ENCODE measurements at regions of chr16 and their contacts with region 1.

Region 1: GRCh38 chr16:2500918-2501750 is 12.6 kb upstream of the ATP6V0C start:
- DNase-seq: peak; percentile 79 to 85 (median 84)
- ATAC-seq: peak; percentile 75 to 83 (median 79)
- H3K4me3 ChIP-seq: no peak overlapping the region
- H3K27ac ChIP-seq: no peak overlapping the region
- H3K4me1 ChIP-seq: peaks cover 0 to 44% (median 23%) of the 10 kb centered on the region in 4 donors
- H3K27me3 ChIP-seq: no peaks in the 10 kb centered on the region
- CTCF ChIP-seq: peak; percentile 97 to 100 (median 98)
- POLR2A ChIP-seq: no peak

Region 2: GRCh38 chr16:2194852-2195321 is 306.2 kb before region 1 on chr16:
- intact Hi-C with region 1: loop called (anchors 10 kb)
- DNase-seq: peak in 1 of 3 donors; percentile 49
- ATAC-seq: peak; percentile 76 to 92 (median 89)
- H3K4me3 ChIP-seq: no peak overlapping the region
- H3K27ac ChIP-seq: no peak overlapping the region
- H3K4me1 ChIP-seq: peaks cover 0 to 10% (median 0%) of the 10 kb centered on the region in 4 donors
- H3K27me3 ChIP-seq: peaks cover 0 to 11% of the 10 kb centered on the region in 2 donors
- CTCF ChIP-seq: peak; percentile 53 to 67 (median 55)
- POLR2A ChIP-seq: no peak

Region 3: DNA sequence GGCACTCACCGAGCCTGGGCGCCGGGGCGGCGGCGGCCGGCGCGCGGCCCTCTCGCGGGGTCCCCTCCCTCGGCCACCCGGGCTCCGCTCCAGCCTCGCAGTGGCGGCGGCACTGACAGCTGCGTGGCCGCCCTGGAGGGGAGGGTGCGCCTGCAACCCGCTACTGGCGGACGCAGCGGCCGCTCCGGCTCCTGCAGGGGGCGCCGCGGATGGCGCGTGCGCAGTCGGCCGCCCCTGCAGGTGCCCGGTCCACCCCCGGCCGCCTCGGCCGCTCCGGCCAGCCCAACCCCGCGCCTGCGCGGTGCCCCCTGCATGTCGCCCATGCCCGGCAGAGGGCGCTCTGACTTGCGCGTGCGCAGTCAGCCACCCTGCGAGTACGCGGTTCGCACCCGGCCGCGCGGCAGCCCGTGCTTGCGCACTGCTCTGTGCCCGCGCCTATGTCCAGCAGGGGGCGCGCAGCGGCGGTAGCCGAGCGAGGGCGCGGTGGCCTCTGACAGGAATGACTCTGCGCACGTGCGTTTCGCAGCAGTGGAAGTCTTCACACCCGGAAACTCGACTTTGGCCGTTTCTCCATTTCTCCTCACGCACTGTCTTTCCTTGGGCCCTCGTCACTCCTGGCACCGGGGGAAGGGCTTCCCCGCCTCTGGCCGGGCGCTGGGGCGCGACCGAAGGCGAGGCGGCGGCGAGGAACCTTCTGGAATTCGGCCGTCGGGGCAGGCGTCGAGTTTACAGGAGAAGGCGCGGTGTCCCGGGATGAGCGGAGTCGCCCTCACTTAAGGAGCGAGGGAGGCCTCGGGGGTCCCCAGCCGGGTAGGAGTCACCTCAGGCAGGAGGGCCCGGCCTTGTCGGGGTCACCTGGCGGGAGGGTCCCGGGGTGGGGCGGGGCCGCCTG is 160.3 kb before region 1 on chr16 and contains the start of gene ABCA3:
- intact Hi-C with region 1: loop called (anchors 5 kb)
- DNase-seq: peak; percentile 93 to 95 (median 93)
- ATAC-seq: peak; percentile 95 to 97 (median 96)
- H3K4me3 ChIP-seq: peak within 1 kb of the TSS; percentile 53 to 72 (median 58)
- H3K27ac ChIP-seq: no peak within 1 kb of the TSS
- H3K4me1 ChIP-seq: peaks cover 0 to 10% (median 0%) of the 10 kb centered on the region in 4 donors
- H3K27me3 ChIP-seq: no peaks in the 10 kb centered on the region
- CTCF ChIP-seq: peak; percentile 100
- POLR2A ChIP-seq: no peak
- total RNA-seq, gene ABCA3: 1.2 to 2.9 (median 2.1) TPM

Region 4: GRCh38 chr16:2429771-2430663 is 71.1 kb before region 1 on chr16:
- intact Hi-C with region 1: loop called in 1 of 2 experiments (anchors 10 kb)
- DNase-seq: peak in 1 of 3 donors; percentile 47
- ATAC-seq: peak in 3 of 4 donors; percentile 2 to 46 (median 3)
- H3K4me3 ChIP-seq: peak overlapping the region; percentile 68 to 81 (median 71)
- H3K27ac ChIP-seq: peak overlapping the region in 2 of 3 donors; percentile 37 to 51
- H3K4me1 ChIP-seq: peaks cover 0 to 11% (median 2%) of the 10 kb centered on the region in 4 donors
- H3K27me3 ChIP-seq: no peaks in the 10 kb centered on the region
- CTCF ChIP-seq: peak in 2 of 4 donors; percentile 21 to 29
- POLR2A ChIP-seq: no peak